MCF 10A (cell line): ENCODE measurements at regions of chr11 and their contacts with region 1.

Region 1: DNA sequence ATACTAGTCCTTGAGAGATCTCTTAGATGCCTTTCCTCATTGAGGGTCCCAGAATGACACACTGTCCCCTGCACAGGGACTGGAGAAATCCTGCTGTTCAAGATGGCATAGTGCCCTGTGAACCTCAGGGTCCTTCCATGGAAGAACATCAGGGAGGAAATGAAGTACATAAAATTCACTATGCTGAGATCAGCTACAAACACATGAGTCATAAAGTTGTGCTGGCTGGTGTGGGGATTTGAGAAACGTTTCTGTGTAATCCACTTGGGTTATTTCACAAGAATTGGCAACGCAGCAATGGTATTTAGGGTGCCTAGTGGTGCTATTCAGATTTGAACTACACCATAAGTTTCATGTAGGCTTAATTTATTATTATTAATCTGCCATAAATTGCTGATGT is 174.4 kb downstream of the MAML2 start:
- DNase-seq: peak; percentile 94
- H3K4me3 Mint-ChIP-seq: peak overlapping the region; percentile 28
- H3K27ac Mint-ChIP-seq: peak overlapping the region; percentile 63
- H3K4me1 Mint-ChIP-seq: peaks cover 34% of the 10 kb centered on the region
- H3K27me3 Mint-ChIP-seq: no peaks in the 10 kb centered on the region
- CTCF ChIP-seq: no peak

Region 2: GRCh38 chr11:95933594-95933993 is 235.0 kb before region 1 on chr11:
- CTCF ChIA-PET with region 1: no interaction called
- POLR2A ChIA-PET with region 1: no interaction called
- intact Hi-C with region 1: no loop called
- DNase-seq: no peak
- H3K4me3 Mint-ChIP-seq: no peak overlapping the region
- H3K27ac Mint-ChIP-seq: no peak overlapping the region
- H3K4me1 Mint-ChIP-seq: no peaks in the 10 kb centered on the region
- H3K27me3 Mint-ChIP-seq: no peaks in the 10 kb centered on the region
- CTCF ChIP-seq: no peak

Region 3: GRCh38 chr11:96155627-96156378 is 12.8 kb before region 1 on chr11:
- CTCF ChIA-PET with region 1: interaction called, 4 read pairs
- POLR2A ChIA-PET with region 1: interaction called, 13 read pairs
- intact Hi-C with region 1: no loop called
- DNase-seq: peak; percentile 93
- H3K4me3 Mint-ChIP-seq: peak overlapping the region; percentile 51
- H3K27ac Mint-ChIP-seq: peak overlapping the region; percentile 88
- H3K4me1 Mint-ChIP-seq: peaks cover 29% of the 10 kb centered on the region
- H3K27me3 Mint-ChIP-seq: no peaks in the 10 kb centered on the region
- CTCF ChIP-seq: peak; percentile 28

Region 4: DNA sequence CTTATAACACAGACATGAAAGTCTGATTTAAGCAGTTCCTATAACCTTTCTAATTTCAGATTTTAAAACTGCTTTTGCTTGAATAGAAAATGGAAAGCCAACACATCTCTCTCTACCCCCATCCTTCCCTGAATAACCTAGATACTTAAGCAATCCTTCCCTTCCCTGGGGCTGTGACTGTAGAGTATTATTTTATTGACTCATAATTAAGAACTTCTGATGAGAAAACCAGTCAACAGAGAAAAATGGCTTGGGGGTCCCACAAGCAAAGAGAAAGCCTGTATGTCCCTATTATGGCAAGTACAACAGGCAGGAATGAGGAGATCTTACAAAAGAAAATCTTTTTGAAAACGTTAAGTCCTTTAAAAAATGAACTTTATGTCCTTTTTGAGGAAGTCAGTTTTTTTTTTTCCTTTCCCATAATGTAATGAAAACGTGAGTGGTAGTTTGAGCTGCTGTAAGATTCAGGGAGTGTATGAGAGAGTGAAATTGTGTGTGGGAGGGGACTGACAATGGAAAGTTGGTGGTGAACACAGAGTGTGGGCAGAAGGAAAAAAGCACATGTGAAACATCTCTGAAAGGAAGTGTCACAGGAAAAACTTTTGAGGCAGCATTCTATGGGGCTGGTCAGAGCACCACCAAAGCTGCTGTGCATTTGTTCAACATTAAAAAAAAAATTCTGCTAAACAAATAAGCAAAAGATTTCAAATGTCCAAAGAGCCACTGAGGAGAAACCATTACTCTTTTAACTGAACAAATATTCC is 19.8 kb after region 1 on chr11:
- CTCF ChIA-PET with region 1: interaction called, 3 read pairs
- POLR2A ChIA-PET with region 1: interaction called, 21 read pairs
- intact Hi-C with region 1: no loop called
- DNase-seq: peak; percentile 87
- H3K4me3 Mint-ChIP-seq: peak overlapping the region; percentile 48
- H3K27ac Mint-ChIP-seq: peak overlapping the region; percentile 96
- H3K4me1 Mint-ChIP-seq: peaks cover 38% of the 10 kb centered on the region
- H3K27me3 Mint-ChIP-seq: no peaks in the 10 kb centered on the region
- CTCF ChIP-seq: no peak